GM12878 (cell line): ENCODE measurements at regions of chr14 and their contacts with region 1.

Region 1: DNA sequence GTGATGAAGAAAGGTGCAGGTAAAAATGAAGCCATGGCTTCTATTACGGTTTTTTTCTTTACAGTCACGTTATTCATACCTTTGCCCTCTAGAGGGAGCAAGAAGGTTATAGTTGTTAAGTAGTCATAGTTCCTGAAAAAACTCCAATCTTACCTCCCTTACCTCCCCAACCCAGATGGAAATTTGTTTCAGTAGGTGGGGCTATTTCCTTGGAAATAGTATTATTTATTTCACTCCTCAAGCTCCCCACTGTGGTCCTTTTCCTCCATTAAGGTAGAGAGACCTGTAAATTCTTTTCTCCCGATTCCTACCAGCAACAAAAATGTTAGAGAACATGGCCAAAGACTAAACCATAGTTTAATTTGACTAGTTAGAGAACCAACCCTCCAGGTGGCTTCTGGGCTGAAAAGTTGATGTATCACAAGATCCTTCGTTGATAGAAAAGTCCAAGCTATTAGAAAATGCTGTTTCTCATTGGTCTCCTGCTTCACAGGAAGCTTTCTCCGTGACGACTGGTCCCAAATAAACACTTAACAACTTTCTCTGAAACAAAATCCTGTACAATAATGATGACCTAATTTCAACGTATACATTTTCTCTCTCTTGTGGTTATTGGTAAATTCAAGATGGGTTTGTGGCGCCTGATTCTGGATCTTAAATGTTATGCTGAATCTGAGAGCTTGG is 43.5 kb downstream of the TMX1 start:
- DNase-seq: no peak
- ATAC-seq: peak; percentile 55; the same call in 2 of the 3 replicates
- H3K4me3 ChIP-seq: no peak overlapping the region
- H3K27ac ChIP-seq: no peak overlapping the region
- H3K4me1 ChIP-seq: peaks cover 8% of the 10 kb centered on the region
- H3K27me3 ChIP-seq: no peaks in the 10 kb centered on the region
- CTCF ChIP-seq: peak; percentile 53 to 74 (median 55); a peak in 5 of 6 replicates
- EP300 ChIP-seq: no peak
- POLR2A ChIP-seq: no peak
- RAD21 ChIP-seq: peak; percentile 71

Region 2: GRCh38 chr14:51269634-51270033 is 13.9 kb before region 1 on chr14:
- CTCF ChIA-PET with region 1: interaction called, 11 read pairs
- POLR2A ChIA-PET with region 1: no interaction called
- RAD21 ChIA-PET with region 1: no interaction called
- SMC1A ChIA-PET with region 1: interaction called, 4 read pairs
- in situ Hi-C with region 1: no loop called
- intact Hi-C with region 1: no loop called
- DNase-seq: no peak
- ATAC-seq: no peak
- H3K4me3 ChIP-seq: no peak overlapping the region
- H3K27ac ChIP-seq: no peak overlapping the region
- H3K4me1 ChIP-seq: no peaks in the 10 kb centered on the region
- H3K27me3 ChIP-seq: no peaks in the 10 kb centered on the region
- CTCF ChIP-seq: no peak
- EP300 ChIP-seq: no peak
- POLR2A ChIP-seq: no peak
- RAD21 ChIP-seq: no peak